ENCODE measurements at regions of chr2 and their contacts with region 1.

Region 1: DNA sequence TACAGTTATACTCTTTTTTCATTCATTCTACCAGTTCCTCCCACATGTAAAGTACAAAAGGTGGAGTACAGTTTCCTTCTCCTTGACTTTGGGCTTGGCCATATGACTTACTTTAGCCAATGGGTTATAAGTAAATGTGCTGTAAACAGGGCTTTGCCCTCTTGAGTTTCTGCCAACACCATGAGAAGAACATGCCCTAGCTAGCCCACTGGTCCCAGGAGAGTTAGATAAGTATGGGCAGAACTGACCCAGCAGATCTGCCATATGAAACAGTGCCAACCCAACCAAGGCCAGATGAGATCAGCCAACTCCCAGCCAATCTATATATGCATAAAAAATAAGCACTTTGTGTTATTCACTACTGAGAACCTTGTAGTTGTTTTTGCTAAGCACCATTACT is 25.5 kb downstream of the ZC3H8 start:
- H3K4me3 Mint-ChIP-seq: no peak overlapping the region
- H3K27ac Mint-ChIP-seq: no peak overlapping the region
- H3K4me1 Mint-ChIP-seq: peaks cover 5% of the 10 kb centered on the region
- H3K27me3 Mint-ChIP-seq: no peaks in the 10 kb centered on the region

Region 2: DNA sequence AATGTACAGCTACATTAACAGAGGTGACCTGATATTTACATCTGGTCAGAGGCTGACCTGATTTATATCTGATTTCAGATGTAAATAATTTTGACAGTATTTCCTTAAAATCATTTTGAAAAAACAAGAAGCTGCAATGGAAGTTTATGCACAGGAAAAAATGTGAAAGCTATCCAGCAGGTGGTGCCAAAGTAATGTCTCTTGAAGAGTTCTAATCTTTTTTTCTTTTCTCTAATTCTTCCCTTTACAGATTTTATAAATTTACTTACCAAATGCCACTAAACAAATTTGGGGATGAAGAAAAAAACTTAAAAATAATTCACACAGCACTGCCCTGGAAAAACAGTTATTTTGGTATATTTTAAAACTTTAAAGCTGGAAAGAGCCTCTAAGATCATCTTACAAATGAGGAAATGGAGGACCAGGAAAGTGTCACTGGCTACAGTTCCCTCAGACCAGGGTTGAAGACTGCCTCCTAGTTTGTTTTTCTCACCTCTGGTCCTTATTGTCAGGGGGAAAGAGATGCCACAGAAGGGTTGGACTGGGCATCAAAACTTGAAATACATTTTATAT is 107.6 kb before region 1 on chr2:
- intact Hi-C with region 1: loop called (anchors 10 kb)
- H3K4me3 Mint-ChIP-seq: no peak overlapping the region
- H3K27ac Mint-ChIP-seq: no peak overlapping the region
- H3K4me1 Mint-ChIP-seq: no peaks in the 10 kb centered on the region
- H3K27me3 Mint-ChIP-seq: no peaks in the 10 kb centered on the region